Ovary (tissue), 10 donors: ENCODE measurements at regions of chr4 and their contacts with region 1.

Region 1: DNA sequence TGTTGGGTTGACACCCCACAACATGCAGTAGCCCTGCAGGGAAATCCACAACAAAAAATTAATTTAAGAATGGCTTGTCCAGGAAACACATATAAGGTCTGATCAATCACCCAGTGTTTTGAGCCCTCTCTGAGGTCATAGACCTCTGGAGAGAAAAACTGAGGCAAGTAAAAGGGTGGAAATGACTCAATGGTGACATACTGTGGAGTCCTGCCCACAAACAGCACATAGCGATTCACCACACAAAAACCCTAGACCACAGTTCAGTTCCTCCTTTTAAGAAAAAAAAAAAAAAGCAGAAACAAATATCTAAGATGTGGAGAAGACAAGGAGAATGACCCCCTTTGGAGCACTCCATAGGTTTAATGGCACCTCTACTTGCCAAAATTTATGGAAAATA is 2691.0 kb downstream of the PCDH7 start:
- DNase-seq: no peak
- H3K4me3 ChIP-seq: no peak overlapping the region
- H3K27ac ChIP-seq: no peak overlapping the region
- H3K4me1 ChIP-seq: no peaks in the 10 kb centered on the region
- H3K27me3 ChIP-seq: no peaks in the 10 kb centered on the region
- CTCF ChIP-seq: no peak
- EP300 ChIP-seq: no peak
- POLR2A ChIP-seq: no peak

Region 2: GRCh38 chr4:33429971-33430370 is 18.8 kb after region 1 on chr4:
- intact Hi-C with region 1: loop called in 1 of 4 experiments (anchors 1 kb)
- DNase-seq: no peak
- H3K4me3 ChIP-seq: no peak overlapping the region
- H3K27ac ChIP-seq: no peak overlapping the region
- H3K4me1 ChIP-seq: no peaks in the 10 kb centered on the region
- H3K27me3 ChIP-seq: no peaks in the 10 kb centered on the region
- CTCF ChIP-seq: no peak
- EP300 ChIP-seq: no peak
- POLR2A ChIP-seq: no peak